ENCODE measurements at regions of chr12 and their contacts with region 1.

Region 1: GRCh38 chr12:21677622-21678277 is 20.1 kb upstream of the LDHB start:
- DNase-seq: no peak
- ATAC-seq: peak; percentile 46
- H3K4me3 ChIP-seq: no peak overlapping the region
- H3K27ac ChIP-seq: no peak overlapping the region
- H3K4me1 ChIP-seq: no peaks in the 10 kb centered on the region
- H3K27me3 ChIP-seq: no peaks in the 10 kb centered on the region
- CTCF ChIP-seq: no peak

Region 2: DNA sequence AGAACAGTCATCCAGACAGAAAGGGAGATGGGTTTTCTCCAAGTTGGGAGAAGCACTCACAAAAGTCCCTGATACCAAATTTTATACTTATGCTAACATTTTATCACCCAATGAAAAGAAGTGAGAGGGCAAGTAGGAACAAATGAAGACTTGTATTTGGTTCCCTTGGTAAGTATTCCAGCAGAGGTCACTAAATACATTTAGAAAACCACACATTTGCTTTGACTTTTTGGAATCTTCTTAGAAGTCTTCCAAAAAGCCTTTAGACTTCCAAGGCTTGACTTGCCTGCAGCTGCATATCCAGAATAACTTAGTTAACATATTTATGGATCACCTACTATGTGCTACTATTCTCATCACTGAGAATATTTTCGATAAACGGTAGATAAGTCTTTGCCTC is 70.0 kb before region 1 on chr12:
- CTCF ChIA-PET with region 1: no interaction called
- POLR2A ChIA-PET with region 1: no interaction called
- intact Hi-C with region 1: loop called (anchors 1 kb)
- DNase-seq: peak; percentile 25
- ATAC-seq: peak; percentile 33; the same call in 1 of the 2 replicates
- H3K4me3 ChIP-seq: no peak overlapping the region
- H3K27ac ChIP-seq: no peak overlapping the region
- H3K4me1 ChIP-seq: no peaks in the 10 kb centered on the region
- H3K27me3 ChIP-seq: no peaks in the 10 kb centered on the region
- CTCF ChIP-seq: peak; percentile 43; the same call in 1 of the 2 replicates

Region 3: DNA sequence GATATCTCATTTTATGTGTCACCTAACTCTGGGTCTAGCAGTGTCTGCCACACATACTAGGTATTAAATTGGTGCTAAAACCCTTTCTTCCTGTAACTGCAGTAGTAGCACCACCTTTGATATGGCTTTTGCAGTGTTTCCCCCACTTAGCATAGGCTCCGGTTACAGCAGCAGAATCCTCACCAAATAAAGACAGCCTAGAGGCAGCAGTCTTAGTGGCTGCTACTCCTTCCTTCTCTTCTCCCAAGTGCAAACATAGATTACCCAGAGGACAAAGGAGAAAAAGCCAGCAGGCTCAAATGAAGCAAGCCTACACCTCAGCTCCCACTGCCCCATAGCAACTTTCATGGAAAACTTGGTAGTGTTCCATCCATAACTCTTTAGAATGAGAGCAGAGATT is 293.6 kb after region 1 on chr12:
- CTCF ChIA-PET with region 1: no interaction called
- POLR2A ChIA-PET with region 1: no interaction called
- intact Hi-C with region 1: no loop called
- DNase-seq: no peak
- ATAC-seq: no peak
- H3K4me3 ChIP-seq: no peak overlapping the region
- H3K27ac ChIP-seq: no peak overlapping the region
- H3K4me1 ChIP-seq: no peaks in the 10 kb centered on the region
- H3K27me3 ChIP-seq: no peaks in the 10 kb centered on the region
- CTCF ChIP-seq: no peak

Measured in PC-3 (cell line).